B cell (primary cell): ENCODE measurements at regions of chr10 and their contacts with region 1.

Region 1: DNA sequence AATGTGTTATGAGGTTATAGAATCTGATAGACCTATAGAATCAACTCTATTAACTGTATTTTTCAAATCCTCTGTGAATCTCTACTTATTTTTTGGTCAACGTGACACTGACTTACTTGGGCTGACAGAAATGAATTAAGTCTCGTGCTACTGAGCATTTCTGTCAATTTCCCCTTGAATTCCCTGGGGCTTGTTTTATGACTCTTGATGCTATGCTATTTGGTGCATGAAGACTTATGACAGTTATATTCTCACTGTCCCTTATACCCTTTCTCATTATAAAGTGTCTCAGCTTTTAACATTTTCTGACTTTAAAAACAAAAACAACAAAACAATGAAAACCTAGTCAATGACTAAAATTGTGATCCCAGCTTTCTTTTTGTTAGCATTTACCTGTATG is 68.5 kb upstream of the OPALIN start:
- DNase-seq: no peak
- ATAC-seq: no peak
- H3K4me3 ChIP-seq: no peak overlapping the region
- H3K4me3 Mint-ChIP-seq: no peak overlapping the region
- H3K27ac ChIP-seq: no peak overlapping the region
- H3K27ac Mint-ChIP-seq: no peak overlapping the region
- H3K4me1 ChIP-seq: no peaks in the 10 kb centered on the region
- H3K4me1 Mint-ChIP-seq: no peaks in the 10 kb centered on the region
- H3K27me3 ChIP-seq: peaks cover 0 to 5% (median 2%) of the 10 kb centered on the region in 4 experiments
- H3K27me3 Mint-ChIP-seq: peaks cover 24% of the 10 kb centered on the region
- CTCF ChIP-seq: no peak

Region 2: GRCh38 chr10:96208271-96208670 is 219.0 kb before region 1 on chr10:
- CTCF ChIA-PET with region 1: no interaction called
- POLR2A ChIA-PET with region 1: interaction called, 10 read pairs
- intact Hi-C with region 1: no loop called
- DNase-seq: no peak
- ATAC-seq: no peak
- H3K4me3 ChIP-seq: no peak overlapping the region
- H3K4me3 Mint-ChIP-seq: no peak overlapping the region
- H3K27ac ChIP-seq: peak overlapping the region in 1 of 2 donors; percentile 7
- H3K27ac Mint-ChIP-seq: no peak overlapping the region
- H3K4me1 ChIP-seq: peaks cover 4 to 7% of the 10 kb centered on the region in 2 donors
- H3K4me1 Mint-ChIP-seq: peaks cover 14% of the 10 kb centered on the region
- H3K27me3 ChIP-seq: no peaks in the 10 kb centered on the region
- H3K27me3 Mint-ChIP-seq: no peaks in the 10 kb centered on the region
- CTCF ChIP-seq: no peak